H1 (cell line): ENCODE measurements at regions of chr2 and their contacts with region 1.

Region 1: DNA sequence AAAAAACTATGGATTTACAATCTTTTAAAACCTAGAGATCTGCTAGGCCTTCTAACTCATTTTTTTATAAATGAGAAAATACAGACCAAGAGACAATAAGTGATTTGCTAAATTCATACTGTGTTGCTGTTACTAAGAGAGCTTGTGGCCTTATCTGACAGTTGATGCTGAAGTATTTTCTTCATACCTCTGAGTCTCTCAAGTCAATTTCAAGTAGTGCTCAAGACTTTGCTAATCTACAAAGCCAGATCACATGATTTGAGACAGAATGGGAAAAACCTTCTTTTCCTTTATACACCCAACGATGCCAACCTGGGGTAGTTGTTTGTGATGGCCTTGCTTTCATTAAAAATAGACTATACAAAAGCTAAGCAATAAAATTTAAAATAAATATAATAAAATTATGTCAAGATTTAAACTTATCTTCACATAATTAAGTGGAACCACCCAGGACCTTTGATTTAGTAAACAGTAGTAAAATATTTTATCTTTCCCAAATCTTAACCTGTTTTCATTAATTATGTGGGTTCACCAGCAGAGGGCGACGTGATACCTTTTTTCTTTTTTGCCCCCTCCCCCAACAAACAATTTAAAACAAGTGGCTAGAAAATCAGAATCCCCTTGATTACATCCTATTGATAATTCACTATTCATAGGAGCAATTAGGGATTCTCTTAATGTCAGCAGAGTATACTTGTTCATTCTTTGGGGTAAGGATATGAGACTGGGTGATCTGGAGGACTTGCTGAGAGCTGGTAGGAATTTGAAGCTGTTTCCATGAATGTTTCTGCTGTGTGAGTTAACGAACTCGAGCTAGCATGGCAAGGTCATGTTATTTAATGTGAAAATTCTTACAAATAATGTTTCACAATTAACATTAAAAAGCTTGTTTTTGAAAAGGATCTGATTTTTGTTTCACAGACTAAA is 49.6 kb upstream of the SLC5A7 start:
- DNase-seq: peak in 1 of 2 experiments; percentile 52
- H3K4me3 ChIP-seq: no peak overlapping the region
- H3K27ac ChIP-seq: no peak overlapping the region
- H3K4me1 ChIP-seq: no peaks in the 10 kb centered on the region
- H3K27me3 ChIP-seq: no peaks in the 10 kb centered on the region
- CTCF ChIP-seq: peak in 2 of 3 experiments; percentile 27 to 57; a peak in 2 of 4 replicates
- EP300 ChIP-seq: no peak
- POLR2A ChIP-seq: no peak
- RAD21 ChIP-seq: peak; percentile 83 to 84

Region 2: GRCh38 chr2:108034849-108035248 is 98.2 kb after region 1 on chr2:
- CTCF ChIA-PET with region 1: interaction called, 22 read pairs
- POLR2A ChIA-PET with region 1: no interaction called
- DNase-seq: no peak
- H3K4me3 ChIP-seq: no peak overlapping the region
- H3K27ac ChIP-seq: no peak overlapping the region
- H3K4me1 ChIP-seq: no peaks in the 10 kb centered on the region
- H3K27me3 ChIP-seq: no peaks in the 10 kb centered on the region
- CTCF ChIP-seq: peak in 2 of 3 experiments; percentile 14 to 32; a peak in 2 of 4 replicates
- EP300 ChIP-seq: no peak
- POLR2A ChIP-seq: no peak
- RAD21 ChIP-seq: peak; percentile 49 to 57

Region 3: GRCh38 chr2:108194409-108195132 is 257.9 kb after region 1 on chr2:
- CTCF ChIA-PET with region 1: interaction called, 17 read pairs
- POLR2A ChIA-PET with region 1: no interaction called
- DNase-seq: no peak
- H3K4me3 ChIP-seq: no peak overlapping the region
- H3K27ac ChIP-seq: no peak overlapping the region
- H3K4me1 ChIP-seq: no peaks in the 10 kb centered on the region
- H3K27me3 ChIP-seq: no peaks in the 10 kb centered on the region
- CTCF ChIP-seq: peak in 1 of 3 experiments; percentile 19; a peak in 2 of 4 replicates
- EP300 ChIP-seq: no peak
- POLR2A ChIP-seq: no peak
- RAD21 ChIP-seq: peak in 1 of 2 experiments; percentile 6; a peak in 1 of 4 replicates